Right lobe of liver (tissue), 6 donors: ENCODE measurements at regions of chr14 and their contacts with region 1.

Region 1: GRCh38 chr14:100654814-100655740 is 67.9 kb upstream of the BEGAIN start:
- DNase-seq: peak; percentile 67 to 74 (median 68)
- ATAC-seq: peak; percentile 85 to 93 (median 90)
- H3K4me3 ChIP-seq: peak overlapping the region in 2 of 3 donors; percentile 36 to 40
- H3K27ac ChIP-seq: no peak overlapping the region
- H3K4me1 ChIP-seq: peaks cover 0 to 15% (median 0%) of the 10 kb centered on the region in 4 donors
- H3K27me3 ChIP-seq: no peaks in the 10 kb centered on the region
- CTCF ChIP-seq: peak; percentile 69 to 83 (median 80)
- POLR2A ChIP-seq: no peak

Region 2: DNA sequence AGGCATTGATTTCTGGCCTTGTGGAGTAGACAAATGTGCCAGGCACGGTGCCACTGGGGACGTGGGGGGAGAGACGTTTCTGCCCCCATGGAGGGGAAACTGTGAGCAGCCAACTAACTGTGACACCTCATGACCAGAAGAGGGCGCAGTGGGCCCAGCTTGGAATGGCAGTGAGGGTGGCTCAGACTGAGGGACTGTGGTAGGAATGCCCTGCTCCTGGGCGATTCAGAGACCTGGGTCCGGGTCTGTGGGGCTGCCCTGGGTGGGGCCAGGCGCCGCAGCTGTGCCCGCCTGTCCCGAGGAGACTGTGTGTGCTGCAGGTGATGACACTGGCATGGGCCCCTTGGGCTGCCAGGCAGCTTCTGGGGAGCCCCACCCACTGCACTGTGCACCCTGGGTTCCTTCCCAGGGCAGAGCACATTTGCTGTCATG is 271.3 kb before region 1 on chr14:
- intact Hi-C with region 1: loop called (anchors 5 kb)
- DNase-seq: peak; percentile 65 to 73 (median 69)
- ATAC-seq: peak; percentile 81 to 90 (median 85)
- H3K4me3 ChIP-seq: no peak overlapping the region
- H3K27ac ChIP-seq: no peak overlapping the region
- H3K4me1 ChIP-seq: peaks cover 0 to 4% (median 0%) of the 10 kb centered on the region in 4 donors
- H3K27me3 ChIP-seq: no peaks in the 10 kb centered on the region
- CTCF ChIP-seq: peak; percentile 77 to 90 (median 84)
- POLR2A ChIP-seq: no peak

Region 3: GRCh38 chr14:100440187-100440631 is 214.9 kb before region 1 on chr14:
- intact Hi-C with region 1: loop called (anchors 5 to 10 kb)
- DNase-seq: peak; percentile 80 to 87 (median 85)
- ATAC-seq: peak; percentile 94 to 97 (median 96)
- H3K4me3 ChIP-seq: no peak overlapping the region
- H3K27ac ChIP-seq: peak overlapping the region in 1 of 3 donors; percentile 13
- H3K4me1 ChIP-seq: peaks cover 0 to 14% (median 0%) of the 10 kb centered on the region in 4 donors
- H3K27me3 ChIP-seq: no peaks in the 10 kb centered on the region
- CTCF ChIP-seq: peak; percentile 75 to 93 (median 86)
- POLR2A ChIP-seq: no peak

Region 4: DNA sequence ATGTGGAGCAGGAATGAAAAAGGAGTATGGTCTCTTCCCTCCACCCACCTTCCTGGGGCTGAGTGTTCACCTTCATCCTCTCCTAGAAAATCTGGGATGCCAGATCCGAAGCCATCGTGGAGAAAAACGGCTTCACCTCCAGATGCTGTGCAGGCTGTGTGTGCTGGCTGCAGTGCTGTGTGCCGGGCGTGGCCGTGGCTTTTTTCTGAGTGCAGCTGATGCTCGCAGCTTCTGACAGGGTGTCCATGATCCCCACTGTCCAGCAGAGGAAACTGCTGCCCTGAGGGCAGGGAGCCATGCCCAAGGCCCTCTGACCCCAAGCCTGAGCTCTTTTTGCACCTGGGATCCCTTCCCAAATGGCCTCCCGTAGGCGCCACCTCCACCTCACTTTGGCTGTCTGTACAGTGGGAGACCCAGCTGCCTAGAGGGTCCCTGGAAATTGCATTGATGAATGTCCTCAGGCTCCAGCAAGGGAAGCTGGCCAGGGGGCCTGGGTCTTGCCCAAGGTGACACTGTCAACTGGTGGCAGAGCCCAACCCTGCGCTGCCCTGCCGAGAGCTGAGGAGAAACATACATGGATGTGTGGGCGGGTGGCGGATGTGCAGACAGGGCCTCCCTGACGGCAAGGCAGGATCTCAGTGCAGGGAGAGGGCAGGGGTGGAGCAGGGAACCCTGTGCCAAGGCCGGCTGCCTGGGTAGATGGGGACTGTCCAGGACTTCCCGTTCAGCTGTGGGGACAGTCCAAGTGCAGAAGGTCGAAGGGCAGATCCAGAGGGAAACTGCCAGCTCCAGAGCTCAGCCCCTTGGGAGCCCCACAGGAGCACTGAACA is 121.2 kb before region 1 on chr14:
- intact Hi-C with region 1: loop called in 1 of 2 experiments (anchors 10 kb)
- DNase-seq: peak; percentile 86 to 93 (median 91)
- ATAC-seq: peak; percentile 91 to 94 (median 92)
- H3K4me3 ChIP-seq: no peak overlapping the region
- H3K27ac ChIP-seq: peak overlapping the region; percentile 21 to 93 (median 89)
- H3K4me1 ChIP-seq: peaks cover 0 to 26% (median 9%) of the 10 kb centered on the region in 4 donors
- H3K27me3 ChIP-seq: no peaks in the 10 kb centered on the region
- CTCF ChIP-seq: no peak
- POLR2A ChIP-seq: no peak